Calu3 (cell line): ENCODE measurements at regions of chr6 and their contacts with region 1.

Region 1: DNA sequence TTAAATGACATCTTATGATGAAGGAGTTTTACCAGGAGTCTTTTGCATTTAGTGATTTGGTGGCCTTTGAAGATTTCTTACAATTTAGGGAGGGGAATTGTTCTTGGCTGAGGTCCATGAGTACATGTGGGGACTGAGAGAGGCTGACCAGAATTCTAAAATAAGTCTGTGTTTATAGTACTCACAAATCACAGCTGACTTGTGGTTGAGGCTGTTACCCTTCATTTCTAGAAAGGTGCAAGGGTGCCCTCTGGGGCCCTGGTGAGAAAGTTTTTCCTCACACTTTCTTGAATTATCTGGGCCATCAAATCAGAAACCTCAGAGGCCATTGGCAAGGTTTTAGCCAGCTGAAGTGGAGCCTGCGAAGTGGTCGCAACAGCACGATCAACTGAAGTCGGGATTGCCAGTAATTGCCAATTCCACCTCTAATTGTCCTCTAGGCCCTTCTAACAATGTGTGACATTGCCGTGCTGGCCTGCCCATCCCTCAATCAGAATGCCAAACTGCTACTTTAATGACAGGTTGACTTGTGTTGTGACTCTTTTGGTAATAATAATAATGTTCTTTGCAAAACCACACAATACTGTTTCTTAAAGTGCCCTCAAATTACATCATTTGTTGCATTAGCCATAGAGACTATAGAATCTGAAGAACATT is 221.6 kb downstream of the OGFRL1 start:
- DNase-seq: peak; percentile 80
- H3K4me3 Mint-ChIP-seq: no peak overlapping the region
- H3K27ac Mint-ChIP-seq: no peak overlapping the region
- H3K4me1 Mint-ChIP-seq: peaks cover 27% of the 10 kb centered on the region
- H3K27me3 Mint-ChIP-seq: no peaks in the 10 kb centered on the region
- CTCF ChIP-seq: peak; percentile 75

Region 2: DNA sequence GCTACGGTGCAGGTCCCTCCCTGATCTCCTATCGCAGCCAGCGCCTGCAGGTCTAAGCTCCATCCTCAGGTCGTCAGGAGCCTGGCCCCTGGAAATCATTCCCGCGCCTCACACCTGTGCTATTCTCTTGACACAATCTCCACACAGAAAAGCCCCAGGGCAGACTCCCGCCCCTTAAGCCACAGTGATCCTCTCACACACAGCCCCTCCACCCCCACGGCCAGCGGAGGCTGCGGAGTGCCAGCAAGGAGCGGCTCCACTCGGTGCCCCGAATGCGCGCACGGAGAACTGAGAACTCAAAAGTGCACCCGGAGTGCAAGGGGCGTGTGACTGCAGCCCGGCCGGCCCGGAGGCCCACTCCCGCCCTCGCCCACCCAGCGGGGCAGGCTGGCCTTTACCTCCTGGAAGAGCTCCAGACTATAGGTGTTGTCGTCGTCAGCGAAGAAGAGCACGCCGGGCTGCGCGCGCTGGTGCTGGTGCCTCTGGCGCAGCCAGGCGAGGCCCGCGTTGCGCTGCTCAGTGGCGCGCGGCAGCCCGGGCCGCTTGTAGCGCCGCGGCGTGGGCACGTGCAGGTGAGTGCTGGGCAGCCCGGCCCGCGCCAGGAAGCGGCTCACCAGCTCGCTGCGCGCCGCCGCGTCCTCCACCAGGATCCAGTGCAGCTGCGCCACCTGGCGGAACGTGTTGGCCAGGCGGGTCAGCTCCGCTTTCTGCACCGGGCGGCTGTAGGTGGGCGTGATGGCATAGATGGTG is 554.6 kb before region 1 on chr6:
- CTCF ChIA-PET with region 1: no interaction called
- intact Hi-C with region 1: no loop called
- DNase-seq: peak; percentile 96
- H3K4me3 Mint-ChIP-seq: peak overlapping the region; percentile 99
- H3K27ac Mint-ChIP-seq: no peak overlapping the region
- H3K4me1 Mint-ChIP-seq: peaks cover 8% of the 10 kb centered on the region
- H3K27me3 Mint-ChIP-seq: peaks cover 97% of the 10 kb centered on the region
- CTCF ChIP-seq: peak; percentile 95

Region 3: DNA sequence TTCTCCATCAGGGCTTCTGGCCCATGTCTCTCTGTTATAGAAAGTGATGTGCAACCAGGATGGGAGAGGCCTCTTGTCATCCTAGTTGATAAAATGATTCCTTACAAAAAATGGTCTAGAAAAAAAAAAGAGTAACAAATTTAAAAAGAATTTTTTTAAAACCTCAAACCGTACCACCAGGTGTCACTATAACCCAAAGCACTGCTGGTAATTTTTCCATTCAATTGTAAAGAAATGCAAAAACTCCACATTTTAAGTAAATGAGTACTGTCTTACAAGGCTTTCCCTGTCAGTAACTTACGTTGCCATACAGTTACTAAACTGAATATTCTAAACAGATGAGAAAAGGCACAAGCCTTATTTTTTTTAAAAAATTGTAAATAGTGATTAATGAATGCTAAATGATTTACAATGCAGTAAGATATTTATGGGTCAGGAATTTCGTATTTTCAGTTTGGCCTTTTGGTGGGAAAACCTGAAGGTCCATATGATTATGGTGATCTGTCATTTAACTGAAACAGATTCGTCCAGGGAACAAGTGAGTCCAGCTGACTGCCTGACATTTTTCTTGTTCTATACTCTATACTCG is 126.2 kb before region 1 on chr6:
- CTCF ChIA-PET with region 1: interaction called, 23 read pairs
- intact Hi-C with region 1: loop called (anchors 1 kb)
- DNase-seq: peak; percentile 56
- H3K4me3 Mint-ChIP-seq: no peak overlapping the region
- H3K27ac Mint-ChIP-seq: peak overlapping the region; percentile 75
- H3K4me1 Mint-ChIP-seq: peaks cover 49% of the 10 kb centered on the region
- H3K27me3 Mint-ChIP-seq: no peaks in the 10 kb centered on the region
- CTCF ChIP-seq: peak; percentile 74

Region 4: GRCh38 chr6:71420693-71421328 is 89.4 kb before region 1 on chr6:
- CTCF ChIA-PET with region 1: no interaction called
- intact Hi-C with region 1: loop called (anchors 1 kb)
- DNase-seq: peak; percentile 98
- H3K4me3 Mint-ChIP-seq: peak overlapping the region; percentile 81
- H3K27ac Mint-ChIP-seq: peak overlapping the region; percentile 85
- H3K4me1 Mint-ChIP-seq: peaks cover 14% of the 10 kb centered on the region
- H3K27me3 Mint-ChIP-seq: no peaks in the 10 kb centered on the region
- CTCF ChIP-seq: no peak

Region 5: DNA sequence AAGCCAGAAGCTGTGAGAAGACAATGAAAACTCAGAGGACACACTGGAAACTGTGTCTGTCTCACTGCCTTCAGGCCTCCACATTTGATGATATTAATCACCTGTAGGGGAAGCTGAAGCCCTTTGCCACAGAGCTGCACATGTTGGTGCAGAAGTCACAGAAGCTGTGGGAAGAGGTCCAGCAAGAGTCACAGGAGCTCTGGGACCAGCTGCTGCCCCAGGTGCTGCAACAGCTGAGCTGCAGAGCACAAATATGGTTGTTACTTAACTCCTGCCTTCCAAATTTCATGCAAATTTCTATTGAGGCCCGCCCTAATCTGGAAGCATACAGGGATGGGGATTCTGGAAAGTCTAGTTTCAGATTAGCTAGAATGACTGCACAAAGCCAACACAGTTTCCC is 52.3 kb before region 1 on chr6:
- CTCF ChIA-PET with region 1: interaction called, 6 read pairs
- intact Hi-C with region 1: loop called (anchors 1 kb)
- DNase-seq: peak; percentile 18
- H3K4me3 Mint-ChIP-seq: no peak overlapping the region
- H3K27ac Mint-ChIP-seq: no peak overlapping the region
- H3K4me1 Mint-ChIP-seq: peaks cover 30% of the 10 kb centered on the region
- H3K27me3 Mint-ChIP-seq: no peaks in the 10 kb centered on the region
- CTCF ChIP-seq: no peak

Region 6: GRCh38 chr6:71929047-71929446 is 418.9 kb after region 1 on chr6:
- CTCF ChIA-PET with region 1: no interaction called
- intact Hi-C with region 1: no loop called
- DNase-seq: no peak
- H3K4me3 Mint-ChIP-seq: no peak overlapping the region
- H3K27ac Mint-ChIP-seq: no peak overlapping the region
- H3K4me1 Mint-ChIP-seq: no peaks in the 10 kb centered on the region
- H3K27me3 Mint-ChIP-seq: no peaks in the 10 kb centered on the region
- CTCF ChIP-seq: no peak